Activated CD8-positive, alpha-beta T cell treated with anti-CD3 and anti-CD28 coated beads for 36 hours (primary cell): ENCODE measurements at regions of chr14 and their contacts with region 1.

Region 1: DNA sequence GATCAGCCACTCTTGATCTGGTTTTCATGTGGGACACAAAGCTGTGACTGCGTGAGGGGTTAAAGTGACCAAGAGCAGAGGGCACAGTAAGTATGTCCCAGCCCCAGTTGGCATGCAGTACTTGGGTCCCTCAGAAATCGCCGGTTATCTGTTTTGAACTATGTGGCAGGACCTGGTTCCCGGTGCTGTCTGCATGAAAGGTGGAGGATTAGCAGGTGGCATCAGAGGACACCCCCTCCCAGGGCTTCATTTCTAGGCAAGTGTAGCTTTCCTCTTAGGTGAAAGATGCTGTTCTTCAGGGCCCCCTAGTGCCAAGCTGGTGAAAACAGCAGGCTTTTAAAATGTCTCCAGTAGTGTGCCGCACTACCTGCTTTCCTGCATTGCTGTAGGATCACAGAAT is 57.1 kb downstream of the ATG14 start:
- DNase-seq: peak; percentile 71
- ATAC-seq: peak; percentile 94
- H3K4me3 Mint-ChIP-seq: no peak overlapping the region
- H3K27ac Mint-ChIP-seq: peak overlapping the region; percentile 74
- H3K4me1 Mint-ChIP-seq: peaks cover 18% of the 10 kb centered on the region
- H3K27me3 Mint-ChIP-seq: no peaks in the 10 kb centered on the region
- CTCF ChIP-seq: peak; percentile 74

Region 2: GRCh38 chr14:55245657-55246268 is 108.7 kb before region 1 on chr14:
- CTCF ChIA-PET with region 1: interaction called, 21 read pairs
- POLR2A ChIA-PET with region 1: no interaction called
- intact Hi-C with region 1: no loop called
- DNase-seq: peak; percentile 47
- ATAC-seq: peak; percentile 34
- H3K4me3 Mint-ChIP-seq: no peak overlapping the region
- H3K27ac Mint-ChIP-seq: no peak overlapping the region
- H3K4me1 Mint-ChIP-seq: no peaks in the 10 kb centered on the region
- H3K27me3 Mint-ChIP-seq: peaks cover 9% of the 10 kb centered on the region
- CTCF ChIP-seq: peak; percentile 64

Region 3: DNA sequence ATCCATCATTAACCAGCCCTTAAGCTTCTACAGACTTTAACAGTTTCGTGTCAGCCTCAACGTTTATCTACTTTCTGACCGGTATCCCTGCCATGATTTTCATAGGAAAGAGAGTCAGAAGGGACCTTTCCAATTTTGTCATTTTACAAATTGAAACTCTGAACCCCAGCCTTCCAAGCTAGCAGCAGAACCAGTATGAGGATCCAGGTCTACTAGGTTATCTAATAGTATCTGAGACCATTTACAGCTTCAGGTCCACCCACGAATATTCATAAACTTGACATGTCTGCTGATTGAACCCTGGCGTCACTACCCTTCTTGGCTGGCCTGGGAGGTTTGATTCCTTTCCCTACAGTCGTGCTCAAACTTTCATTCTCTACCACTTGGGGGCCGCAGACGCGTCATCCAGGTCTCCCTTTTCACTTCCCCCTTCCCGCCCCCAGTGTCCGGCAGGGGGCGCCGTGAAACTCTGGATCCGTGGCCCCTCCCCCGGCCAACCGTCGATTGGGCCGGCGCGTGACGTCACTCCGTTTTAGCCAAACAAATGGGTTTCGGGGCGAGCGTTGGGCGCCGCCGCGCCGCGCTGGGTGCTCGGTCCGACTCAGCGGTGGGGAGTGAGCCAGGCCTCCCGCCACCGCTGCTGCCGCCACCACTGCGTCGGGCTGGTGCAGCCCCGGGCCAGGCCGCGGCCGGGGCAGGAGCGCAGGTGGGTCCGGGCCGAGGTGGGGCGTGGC is 83.5 kb before region 1 on chr14 and contains the start of gene FBXO34:
- CTCF ChIA-PET with region 1: interaction called, 87 read pairs
- POLR2A ChIA-PET with region 1: interaction called, 5 read pairs
- intact Hi-C with region 1: loop called (anchors 2 kb)
- DNase-seq: peak; percentile 100
- ATAC-seq: peak; percentile 91
- H3K4me3 Mint-ChIP-seq: peak within 1 kb of the TSS; percentile 87
- H3K27ac Mint-ChIP-seq: peak within 1 kb of the TSS; percentile 92
- H3K4me1 Mint-ChIP-seq: peaks cover 38% of the 10 kb centered on the region
- H3K27me3 Mint-ChIP-seq: no peaks in the 10 kb centered on the region
- CTCF ChIP-seq: peak; percentile 89
- total RNA-seq, gene FBXO34: 17.7 to 20.0 TPM

Region 4: GRCh38 chr14:55327179-55327578 is 27.3 kb before region 1 on chr14:
- CTCF ChIA-PET with region 1: interaction called, 18 read pairs
- POLR2A ChIA-PET with region 1: no interaction called
- intact Hi-C with region 1: no loop called
- DNase-seq: no peak
- ATAC-seq: peak; percentile 59
- H3K4me3 Mint-ChIP-seq: no peak overlapping the region
- H3K27ac Mint-ChIP-seq: peak overlapping the region; percentile 17
- H3K4me1 Mint-ChIP-seq: peaks cover 53% of the 10 kb centered on the region
- H3K27me3 Mint-ChIP-seq: no peaks in the 10 kb centered on the region
- CTCF ChIP-seq: no peak

Region 5: GRCh38 chr14:55366271-55366670 is 11.8 kb after region 1 on chr14:
- CTCF ChIA-PET with region 1: interaction called, 29 read pairs
- POLR2A ChIA-PET with region 1: interaction called, 5 read pairs
- intact Hi-C with region 1: no loop called
- DNase-seq: no peak
- ATAC-seq: no peak
- H3K4me3 Mint-ChIP-seq: no peak overlapping the region
- H3K27ac Mint-ChIP-seq: no peak overlapping the region
- H3K4me1 Mint-ChIP-seq: peaks cover 13% of the 10 kb centered on the region
- H3K27me3 Mint-ChIP-seq: no peaks in the 10 kb centered on the region
- CTCF ChIP-seq: no peak

Region 6: DNA sequence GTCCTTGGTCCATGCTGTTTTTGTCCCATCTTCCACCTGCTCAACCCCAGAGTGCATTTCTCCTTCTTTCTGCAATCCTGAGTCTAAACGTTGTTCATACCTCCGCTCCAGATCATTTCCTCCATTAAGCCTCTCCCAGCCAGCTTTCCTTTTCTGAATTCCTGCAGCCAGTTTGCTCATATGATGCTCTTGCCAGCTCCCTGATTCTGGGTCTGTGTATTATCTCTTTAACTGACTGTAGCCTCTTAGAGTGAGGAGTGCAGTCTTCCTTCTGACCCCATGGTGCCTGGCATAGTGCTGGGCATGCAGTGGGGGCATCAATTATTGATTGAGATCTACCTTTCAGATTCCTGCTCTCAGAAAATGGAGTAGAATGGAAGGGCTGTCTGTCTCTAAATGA is 97.5 kb after region 1 on chr14:
- CTCF ChIA-PET with region 1: no interaction called
- POLR2A ChIA-PET with region 1: no interaction called
- intact Hi-C with region 1: no loop called
- DNase-seq: no peak
- ATAC-seq: no peak
- H3K4me3 Mint-ChIP-seq: no peak overlapping the region
- H3K27ac Mint-ChIP-seq: no peak overlapping the region
- H3K4me1 Mint-ChIP-seq: peaks cover 1% of the 10 kb centered on the region
- H3K27me3 Mint-ChIP-seq: no peaks in the 10 kb centered on the region
- CTCF ChIP-seq: no peak

Region 7: DNA sequence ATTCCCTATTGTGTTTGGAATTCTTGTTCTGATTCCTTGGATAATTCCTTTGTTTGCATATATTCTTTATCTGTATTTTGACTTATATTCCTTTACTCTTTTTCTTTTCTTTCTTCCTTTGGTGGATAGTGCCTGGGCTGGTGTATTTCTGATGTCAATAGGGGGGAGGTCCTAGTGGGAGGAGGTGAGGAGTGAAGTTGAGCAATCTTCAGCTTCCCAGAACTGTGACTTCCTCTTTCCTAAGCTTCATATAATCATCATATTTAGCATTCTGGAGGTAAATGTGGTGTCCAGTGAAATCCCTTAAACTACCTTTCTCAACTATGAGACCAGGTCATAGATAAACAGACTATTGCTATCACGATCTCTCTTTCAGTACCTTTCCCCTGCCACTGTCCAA is 115.5 kb after region 1 on chr14:
- CTCF ChIA-PET with region 1: no interaction called
- POLR2A ChIA-PET with region 1: no interaction called
- intact Hi-C with region 1: no loop called
- DNase-seq: no peak
- ATAC-seq: no peak
- H3K4me3 Mint-ChIP-seq: no peak overlapping the region
- H3K27ac Mint-ChIP-seq: no peak overlapping the region
- H3K4me1 Mint-ChIP-seq: no peaks in the 10 kb centered on the region
- H3K27me3 Mint-ChIP-seq: peaks cover 3% of the 10 kb centered on the region
- CTCF ChIP-seq: no peak

Region 8: GRCh38 chr14:55514819-55515490 is 160.5 kb after region 1 on chr14:
- CTCF ChIA-PET with region 1: no interaction called
- POLR2A ChIA-PET with region 1: no interaction called
- intact Hi-C with region 1: no loop called
- DNase-seq: no peak
- ATAC-seq: no peak
- H3K4me3 Mint-ChIP-seq: no peak overlapping the region
- H3K27ac Mint-ChIP-seq: no peak overlapping the region
- H3K4me1 Mint-ChIP-seq: no peaks in the 10 kb centered on the region
- H3K27me3 Mint-ChIP-seq: no peaks in the 10 kb centered on the region
- CTCF ChIP-seq: no peak